Endothelial cell of umbilical vein (primary cell): ENCODE measurements at regions of chr18 and their contacts with region 1.

Region 1: GRCh38 chr18:7221424-7222155 is 9.3 kb upstream of the LRRC30 start:
- DNase-seq: peak; percentile 69
- H3K4me3 ChIP-seq: no peak overlapping the region
- H3K27ac ChIP-seq: no peak overlapping the region
- H3K4me1 ChIP-seq: no peaks in the 10 kb centered on the region
- H3K27me3 ChIP-seq: peaks cover 0 to 1% of the 10 kb centered on the region in 2 experiments
- CTCF ChIP-seq: peak; percentile 71 to 79
- POLR2A ChIP-seq: no peak

Region 2: DNA sequence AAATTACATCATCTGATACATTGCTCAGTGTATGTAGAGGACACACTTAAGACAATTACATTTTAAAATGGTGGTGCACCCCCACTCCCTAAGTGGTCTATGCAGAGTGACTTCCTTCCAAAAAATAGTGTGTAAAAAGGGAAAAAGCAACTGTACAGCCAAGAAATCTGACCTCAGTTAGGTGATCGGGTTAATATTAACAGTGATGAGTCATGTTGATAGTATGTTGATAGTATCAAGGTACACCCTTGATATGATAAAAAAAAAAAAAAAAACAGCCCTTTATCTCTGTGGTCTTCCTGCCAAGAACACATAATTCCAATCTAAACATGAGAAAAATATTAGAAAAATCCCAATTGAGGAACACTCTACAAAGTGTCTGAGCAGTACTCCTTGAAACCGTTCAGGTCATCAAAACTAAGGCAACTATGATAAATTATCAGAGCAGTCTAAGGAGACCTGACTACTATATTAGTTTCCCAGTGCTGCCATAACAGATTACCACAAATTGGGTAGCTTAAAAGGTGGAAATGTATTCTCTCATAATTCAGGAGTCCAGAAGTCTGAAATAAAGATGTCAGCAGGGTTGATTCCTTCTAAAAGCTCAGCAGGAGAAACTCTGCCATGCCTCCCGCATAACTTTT is 320.2 kb before region 1 on chr18:
- CTCF ChIA-PET with region 1: no interaction called
- POLR2A ChIA-PET with region 1: no interaction called
- dilution Hi-C with region 1: no loop called
- intact Hi-C with region 1: no loop called
- DNase-seq: no peak
- H3K4me3 ChIP-seq: no peak overlapping the region
- H3K27ac ChIP-seq: no peak overlapping the region
- H3K4me1 ChIP-seq: peaks cover 4% of the 10 kb centered on the region
- H3K27me3 ChIP-seq: no peaks in the 10 kb centered on the region
- CTCF ChIP-seq: no peak
- POLR2A ChIP-seq: no peak

Region 3: DNA sequence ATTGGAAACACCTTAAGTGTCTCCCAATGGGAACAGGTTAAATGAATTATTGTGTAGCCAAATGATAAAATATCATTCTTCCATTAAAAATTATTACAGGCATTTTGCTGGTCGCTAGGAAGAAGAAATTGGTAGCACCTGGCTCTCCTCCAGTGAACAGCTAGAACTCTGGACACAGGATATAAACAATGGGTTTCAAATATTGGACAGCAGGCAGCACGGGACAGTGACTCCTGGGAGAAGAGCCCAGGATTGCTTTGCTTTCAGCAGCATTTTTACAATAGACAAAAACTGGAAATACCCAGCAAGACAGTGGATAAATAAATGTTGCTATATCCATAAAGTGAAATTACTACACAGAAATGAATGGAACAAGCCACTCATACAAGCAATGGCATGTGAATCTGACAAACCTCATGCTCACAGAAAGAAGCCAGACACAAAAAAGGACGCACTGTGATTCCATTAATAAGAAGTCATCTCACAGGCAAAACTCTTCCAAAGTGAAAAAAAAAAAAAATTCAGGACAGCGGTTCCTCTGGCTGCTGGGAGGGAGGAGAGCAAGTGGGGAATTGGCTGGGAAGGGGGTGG is 154.5 kb before region 1 on chr18:
- CTCF ChIA-PET with region 1: no interaction called
- POLR2A ChIA-PET with region 1: no interaction called
- dilution Hi-C with region 1: no loop called
- intact Hi-C with region 1: no loop called
- DNase-seq: no peak
- H3K4me3 ChIP-seq: no peak overlapping the region
- H3K27ac ChIP-seq: no peak overlapping the region
- H3K4me1 ChIP-seq: no peaks in the 10 kb centered on the region
- H3K27me3 ChIP-seq: peaks cover 0 to 4% of the 10 kb centered on the region in 2 experiments
- CTCF ChIP-seq: no peak
- POLR2A ChIP-seq: no peak

Region 4: DNA sequence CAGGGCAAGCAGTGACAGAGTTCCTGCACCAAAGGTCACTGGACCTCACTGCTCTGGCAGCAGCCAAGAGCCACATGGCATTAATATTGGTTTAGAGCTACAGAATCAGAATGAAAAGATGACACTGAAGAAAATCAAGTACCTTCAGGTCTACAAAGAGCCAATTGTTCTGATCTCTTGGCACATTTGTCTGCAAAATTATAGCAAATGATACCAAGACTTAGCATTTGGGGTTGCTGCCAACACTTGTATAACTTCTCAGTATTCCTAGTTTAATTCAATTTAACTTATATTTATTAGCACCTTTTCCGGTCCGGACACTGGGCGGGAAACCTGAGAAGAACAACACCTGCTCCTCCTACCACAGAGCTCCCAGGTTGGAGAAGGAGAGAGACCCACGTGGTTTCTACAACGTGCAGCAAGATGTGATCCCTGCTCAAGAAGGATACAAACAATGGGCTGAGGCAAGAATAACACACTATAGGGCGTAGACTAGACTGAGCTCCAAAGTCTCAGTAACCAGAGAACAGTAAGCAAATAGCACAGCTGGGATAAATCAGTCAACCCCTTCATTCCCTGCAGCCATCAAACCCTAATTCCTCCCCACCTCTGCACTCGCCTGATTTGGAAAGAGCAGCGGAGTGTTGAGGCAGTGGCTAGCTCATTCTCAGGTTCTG is 11.7 kb after region 1 on chr18:
- CTCF ChIA-PET with region 1: interaction called, 10 read pairs
- POLR2A ChIA-PET with region 1: no interaction called
- dilution Hi-C with region 1: no loop called
- intact Hi-C with region 1: no loop called
- DNase-seq: no peak
- H3K4me3 ChIP-seq: no peak overlapping the region
- H3K27ac ChIP-seq: no peak overlapping the region
- H3K4me1 ChIP-seq: no peaks in the 10 kb centered on the region
- H3K27me3 ChIP-seq: peaks cover 3% of the 10 kb centered on the region in 2 experiments
- CTCF ChIP-seq: no peak
- POLR2A ChIP-seq: no peak

Region 5: DNA sequence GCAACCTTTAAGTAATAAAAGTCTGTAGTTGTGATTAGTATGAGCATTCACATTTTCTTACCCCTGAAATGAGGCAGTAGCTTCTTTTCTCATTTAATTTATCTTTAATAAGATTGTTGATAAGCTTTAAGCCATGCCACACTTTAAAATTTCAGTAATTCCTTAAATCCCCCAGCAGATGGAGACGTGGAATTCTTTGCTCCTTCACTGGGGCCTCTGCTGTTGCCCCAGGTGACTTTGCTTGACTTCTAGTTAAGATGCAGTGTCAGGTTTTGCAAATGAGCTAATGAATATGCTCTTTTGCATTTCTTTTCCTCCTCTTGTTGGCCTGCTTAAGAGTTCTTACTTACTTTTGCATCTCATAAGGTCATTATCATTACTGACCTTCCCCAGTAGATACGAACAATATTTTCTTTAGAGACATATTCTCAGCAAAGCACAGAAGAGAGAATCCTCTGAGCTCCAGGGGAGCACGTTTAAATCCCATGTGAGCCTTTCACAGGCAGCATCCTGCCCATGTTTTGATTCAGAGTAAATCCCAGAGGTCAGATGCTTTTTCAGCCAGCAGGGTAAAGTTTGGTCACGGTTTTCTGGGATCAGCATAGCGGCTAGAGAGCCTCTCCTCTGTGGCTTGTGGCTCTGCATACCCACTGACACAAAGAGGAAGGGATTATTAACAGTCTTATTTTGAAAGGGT is 568.4 kb after region 1 on chr18:
- CTCF ChIA-PET with region 1: interaction called, 3 read pairs
- POLR2A ChIA-PET with region 1: no interaction called
- dilution Hi-C with region 1: no loop called
- intact Hi-C with region 1: loop called (anchors 5 kb)
- DNase-seq: peak; percentile 59
- H3K4me3 ChIP-seq: no peak overlapping the region
- H3K27ac ChIP-seq: no peak overlapping the region
- H3K4me1 ChIP-seq: no peaks in the 10 kb centered on the region
- H3K27me3 ChIP-seq: no peaks in the 10 kb centered on the region
- CTCF ChIP-seq: peak; percentile 31 to 43
- POLR2A ChIP-seq: no peak

Region 6: GRCh38 chr18:8084160-8084559 is 862.6 kb after region 1 on chr18:
- CTCF ChIA-PET with region 1: no interaction called
- POLR2A ChIA-PET with region 1: no interaction called
- dilution Hi-C with region 1: no loop called
- intact Hi-C with region 1: loop called (anchors 10 kb)
- DNase-seq: peak; percentile 43
- H3K4me3 ChIP-seq: no peak overlapping the region
- H3K27ac ChIP-seq: no peak overlapping the region
- H3K4me1 ChIP-seq: no peaks in the 10 kb centered on the region
- H3K27me3 ChIP-seq: no peaks in the 10 kb centered on the region
- CTCF ChIP-seq: peak; percentile 55 to 64
- POLR2A ChIP-seq: no peak

Region 7: GRCh38 chr18:8389391-8390340 is 1168.1 kb after region 1 on chr18:
- CTCF ChIA-PET with region 1: interaction called, 13 read pairs
- POLR2A ChIA-PET with region 1: no interaction called
- dilution Hi-C with region 1: no loop called
- intact Hi-C with region 1: loop called (anchors 5 kb)
- DNase-seq: peak; percentile 78
- H3K4me3 ChIP-seq: no peak overlapping the region
- H3K27ac ChIP-seq: no peak overlapping the region
- H3K4me1 ChIP-seq: peaks cover 4% of the 10 kb centered on the region
- H3K27me3 ChIP-seq: no peaks in the 10 kb centered on the region
- CTCF ChIP-seq: peak; percentile 81 to 82
- POLR2A ChIP-seq: no peak

Region 8: DNA sequence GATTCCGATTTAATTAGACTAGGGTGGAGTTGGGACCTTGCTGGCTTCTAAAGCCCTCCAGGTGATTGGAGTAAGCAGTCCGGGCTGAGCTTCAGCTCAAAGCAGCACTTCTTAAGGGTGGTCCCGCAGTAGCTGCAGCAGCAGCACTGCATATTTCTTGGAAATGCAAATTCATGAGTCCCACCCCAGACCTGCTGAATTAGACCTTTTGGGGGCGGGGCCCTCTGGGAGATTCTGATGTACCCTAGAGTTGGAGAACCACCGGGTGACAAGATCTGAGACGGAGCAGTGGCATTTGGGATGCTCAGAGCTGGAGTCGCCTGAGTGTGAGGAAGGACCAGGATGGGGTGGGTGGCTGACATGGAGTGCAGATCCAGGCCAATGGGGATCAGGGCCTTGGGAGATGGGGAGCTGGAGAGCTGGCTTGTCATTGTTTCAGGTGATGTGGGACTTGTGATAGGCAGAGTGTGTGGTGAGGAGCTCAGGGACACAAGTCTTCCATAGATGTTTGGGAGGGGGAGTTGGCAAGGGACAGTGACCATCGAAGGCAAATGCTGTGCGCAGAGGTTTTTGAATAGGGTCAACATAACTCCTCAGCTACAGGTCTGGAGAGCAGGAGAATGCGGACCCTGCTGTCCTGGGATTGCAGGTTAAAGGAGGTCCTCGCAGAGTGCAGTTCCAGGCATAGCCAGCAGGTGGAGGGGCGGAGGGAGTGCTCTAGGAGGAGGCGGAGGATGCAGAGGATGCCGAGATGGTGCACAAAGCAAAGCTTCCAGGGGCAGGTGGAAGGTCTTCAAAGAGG is 1256.8 kb after region 1 on chr18:
- CTCF ChIA-PET with region 1: interaction called, 49 read pairs
- POLR2A ChIA-PET with region 1: no interaction called
- dilution Hi-C with region 1: no loop called
- intact Hi-C with region 1: loop called (anchors 1 kb)
- DNase-seq: peak; percentile 55
- H3K4me3 ChIP-seq: no peak overlapping the region
- H3K27ac ChIP-seq: no peak overlapping the region
- H3K4me1 ChIP-seq: no peaks in the 10 kb centered on the region
- H3K27me3 ChIP-seq: peaks cover 0 to 3% of the 10 kb centered on the region in 2 experiments
- CTCF ChIP-seq: peak; percentile 67 to 92
- POLR2A ChIP-seq: no peak